ENCODE measurements at regions of chr10 and their contacts with region 1.

Region 1: GRCh38 chr10:86261941-86262687 is 104.5 kb downstream of the GRID1 start:
- DNase-seq: peak; percentile 66
- ATAC-seq: peak; percentile 89
- H3K4me3 Mint-ChIP-seq: no peak overlapping the region
- H3K27ac Mint-ChIP-seq: no peak overlapping the region
- H3K4me1 Mint-ChIP-seq: peaks cover 20% of the 10 kb centered on the region
- H3K27me3 Mint-ChIP-seq: peaks cover 4% of the 10 kb centered on the region; the same call in 1 of the 2 replicates
- CTCF ChIP-seq: no peak

Region 2: DNA sequence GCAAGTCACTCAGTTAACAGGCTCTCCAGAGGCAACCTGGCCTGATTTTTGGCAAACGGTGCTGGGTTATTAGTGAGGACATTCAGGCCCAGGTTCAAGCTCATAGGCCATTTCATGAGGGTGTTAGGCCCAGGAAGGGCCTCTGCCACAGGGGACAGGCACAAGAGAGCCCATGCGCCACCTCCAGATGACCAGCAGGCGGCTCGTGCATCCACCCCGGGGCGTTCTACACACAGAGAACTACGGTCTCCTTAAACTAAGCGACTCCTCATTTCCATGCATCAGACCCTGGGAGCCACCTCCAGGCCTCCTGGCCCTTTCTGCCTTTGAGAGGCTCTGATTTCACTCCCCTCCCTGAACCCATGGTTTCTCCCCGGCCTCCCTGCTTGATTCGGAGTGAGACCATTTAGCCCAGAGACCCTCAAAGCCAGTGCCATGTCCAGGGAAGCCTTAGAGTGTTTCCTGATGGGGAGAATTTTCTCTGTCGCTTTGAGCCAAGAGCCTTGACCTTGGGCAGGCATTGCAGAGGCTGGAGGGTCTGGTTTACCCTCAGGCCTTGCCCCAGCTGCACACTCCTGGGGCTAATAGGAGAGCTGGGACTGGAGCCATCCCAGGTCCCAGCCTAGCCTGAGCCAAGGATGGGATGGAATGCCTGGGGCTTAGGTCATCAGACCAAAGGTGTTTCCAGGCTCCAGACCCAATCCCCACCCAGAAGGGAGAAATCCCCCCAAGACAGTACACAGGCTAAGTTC is 83.5 kb before region 1 on chr10:
- CTCF ChIA-PET with region 1: interaction called, 11 read pairs
- POLR2A ChIA-PET with region 1: no interaction called
- DNase-seq: peak; percentile 82
- ATAC-seq: peak; percentile 99
- H3K4me3 Mint-ChIP-seq: no peak overlapping the region
- H3K27ac Mint-ChIP-seq: no peak overlapping the region
- H3K4me1 Mint-ChIP-seq: no peaks in the 10 kb centered on the region
- H3K27me3 Mint-ChIP-seq: no peaks in the 10 kb centered on the region
- CTCF ChIP-seq: peak; percentile 64

Region 3: GRCh38 chr10:86291616-86292340 is 29.7 kb after region 1 on chr10:
- CTCF ChIA-PET with region 1: interaction called, 28 read pairs
- POLR2A ChIA-PET with region 1: no interaction called
- DNase-seq: peak; percentile 57
- ATAC-seq: peak; percentile 82
- H3K4me3 Mint-ChIP-seq: no peak overlapping the region
- H3K27ac Mint-ChIP-seq: no peak overlapping the region
- H3K4me1 Mint-ChIP-seq: peaks cover 25% of the 10 kb centered on the region
- H3K27me3 Mint-ChIP-seq: peaks cover 3% of the 10 kb centered on the region; the same call in 1 of the 2 replicates
- CTCF ChIP-seq: no peak

Region 4: DNA sequence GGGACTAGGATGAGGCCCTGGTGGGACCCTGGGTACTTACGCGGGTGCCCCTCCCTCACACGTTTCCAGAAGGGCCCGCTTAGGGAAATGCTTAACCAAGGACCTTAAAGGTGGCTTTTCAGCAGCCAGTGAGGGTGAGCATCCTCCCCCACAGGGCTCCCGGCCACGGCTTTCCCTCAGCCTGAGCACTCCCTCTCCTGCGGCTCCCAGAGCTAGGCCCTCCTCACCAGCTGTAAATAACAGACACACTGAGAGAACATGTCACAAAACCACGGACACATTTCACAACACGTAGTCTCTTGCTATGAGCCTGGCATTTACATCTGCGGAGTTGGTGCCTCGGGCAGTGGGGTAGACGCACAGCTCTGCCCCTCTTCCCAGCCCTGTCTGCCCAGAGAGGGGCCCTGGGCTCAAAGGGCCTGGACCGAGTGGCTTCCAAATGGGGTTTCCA is 79.3 kb after region 1 on chr10:
- CTCF ChIA-PET with region 1: interaction called, 11 read pairs
- POLR2A ChIA-PET with region 1: no interaction called
- DNase-seq: no peak
- ATAC-seq: peak; percentile 10
- H3K4me3 Mint-ChIP-seq: no peak overlapping the region
- H3K27ac Mint-ChIP-seq: no peak overlapping the region
- H3K4me1 Mint-ChIP-seq: peaks cover 19% of the 10 kb centered on the region
- H3K27me3 Mint-ChIP-seq: no peaks in the 10 kb centered on the region
- CTCF ChIP-seq: no peak

Region 5: DNA sequence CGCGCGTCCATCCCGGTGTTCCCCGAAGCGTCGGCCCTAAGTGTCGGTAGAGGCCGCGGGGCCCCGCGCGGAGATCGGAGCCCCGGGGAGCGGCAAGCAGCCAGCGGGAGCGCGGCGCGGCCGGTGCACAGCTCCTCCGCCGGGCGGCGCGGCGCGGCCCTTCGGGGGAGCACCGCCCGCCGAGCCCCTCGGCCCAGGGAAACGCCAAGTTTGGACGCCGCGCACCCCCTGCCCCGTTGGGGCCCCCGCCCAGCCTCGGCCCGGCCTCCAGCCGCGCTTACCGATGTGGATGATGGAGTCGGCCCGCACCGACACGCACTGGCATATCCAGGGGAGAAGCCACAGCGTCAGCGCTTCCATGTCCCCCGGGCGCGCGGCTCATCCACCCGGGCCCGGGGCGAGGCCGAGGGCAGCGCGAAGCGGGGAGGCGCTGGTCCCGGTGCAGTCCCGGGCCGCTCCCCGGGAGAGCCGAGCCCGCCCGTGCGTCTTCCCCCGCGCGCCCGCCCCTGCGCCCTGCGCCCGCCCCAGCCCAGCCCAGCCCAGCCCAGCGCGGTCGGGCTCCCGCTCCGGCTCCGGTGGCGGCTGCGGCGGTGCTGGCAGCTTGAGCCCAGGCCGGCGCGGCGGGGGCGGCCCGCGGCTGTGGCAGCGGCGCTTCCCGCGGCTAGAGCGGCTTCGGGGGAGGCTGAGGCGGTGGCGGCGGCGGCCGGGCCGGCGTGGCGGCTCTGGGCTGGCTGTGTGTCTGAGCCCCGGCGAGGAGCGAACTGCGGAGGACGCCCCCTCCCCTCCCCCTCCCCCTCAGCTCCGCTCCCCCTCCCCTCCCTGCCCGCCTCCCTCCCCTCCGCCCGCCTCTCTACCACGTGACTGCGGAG is 104.2 kb after region 1 on chr10 and contains the start of gene GRID1:
- CTCF ChIA-PET with region 1: interaction called, 27 read pairs
- POLR2A ChIA-PET with region 1: interaction called, 3 read pairs
- DNase-seq: peak; percentile 58
- ATAC-seq: peak; percentile 2; the same call in 1 of the 2 replicates
- H3K4me3 Mint-ChIP-seq: peak within 1 kb of the TSS; percentile 59
- H3K27ac Mint-ChIP-seq: no peak within 1 kb of the TSS
- H3K4me1 Mint-ChIP-seq: peaks cover 18% of the 10 kb centered on the region
- H3K27me3 Mint-ChIP-seq: peaks cover 91% of the 10 kb centered on the region
- CTCF ChIP-seq: no peak
- total RNA-seq, gene GRID1: 0.21 to 0.50 TPM (median 0.37 TPM) in 3 replicates

Region 6: GRCh38 chr10:86419101-86419500 is 157.0 kb after region 1 on chr10:
- CTCF ChIA-PET with region 1: no interaction called
- POLR2A ChIA-PET with region 1: no interaction called
- DNase-seq: no peak
- ATAC-seq: no peak
- H3K4me3 Mint-ChIP-seq: no peak overlapping the region
- H3K27ac Mint-ChIP-seq: no peak overlapping the region
- H3K4me1 Mint-ChIP-seq: peaks cover 24% of the 10 kb centered on the region
- H3K27me3 Mint-ChIP-seq: no peaks in the 10 kb centered on the region; the same call in 1 of the 2 replicates
- CTCF ChIP-seq: no peak